MCF 10A (cell line): ENCODE measurements at regions of chr7 and their contacts with region 1.

Region 1: GRCh38 chr7:7424151-7424873 is 111.4 kb downstream of the COL28A1 start:
- DNase-seq: peak; percentile 85
- H3K4me3 Mint-ChIP-seq: peak overlapping the region; percentile 52
- H3K27ac Mint-ChIP-seq: no peak overlapping the region
- H3K4me1 Mint-ChIP-seq: peaks cover 20% of the 10 kb centered on the region
- H3K27me3 Mint-ChIP-seq: no peaks in the 10 kb centered on the region
- CTCF ChIP-seq: peak; percentile 89

Region 2: DNA sequence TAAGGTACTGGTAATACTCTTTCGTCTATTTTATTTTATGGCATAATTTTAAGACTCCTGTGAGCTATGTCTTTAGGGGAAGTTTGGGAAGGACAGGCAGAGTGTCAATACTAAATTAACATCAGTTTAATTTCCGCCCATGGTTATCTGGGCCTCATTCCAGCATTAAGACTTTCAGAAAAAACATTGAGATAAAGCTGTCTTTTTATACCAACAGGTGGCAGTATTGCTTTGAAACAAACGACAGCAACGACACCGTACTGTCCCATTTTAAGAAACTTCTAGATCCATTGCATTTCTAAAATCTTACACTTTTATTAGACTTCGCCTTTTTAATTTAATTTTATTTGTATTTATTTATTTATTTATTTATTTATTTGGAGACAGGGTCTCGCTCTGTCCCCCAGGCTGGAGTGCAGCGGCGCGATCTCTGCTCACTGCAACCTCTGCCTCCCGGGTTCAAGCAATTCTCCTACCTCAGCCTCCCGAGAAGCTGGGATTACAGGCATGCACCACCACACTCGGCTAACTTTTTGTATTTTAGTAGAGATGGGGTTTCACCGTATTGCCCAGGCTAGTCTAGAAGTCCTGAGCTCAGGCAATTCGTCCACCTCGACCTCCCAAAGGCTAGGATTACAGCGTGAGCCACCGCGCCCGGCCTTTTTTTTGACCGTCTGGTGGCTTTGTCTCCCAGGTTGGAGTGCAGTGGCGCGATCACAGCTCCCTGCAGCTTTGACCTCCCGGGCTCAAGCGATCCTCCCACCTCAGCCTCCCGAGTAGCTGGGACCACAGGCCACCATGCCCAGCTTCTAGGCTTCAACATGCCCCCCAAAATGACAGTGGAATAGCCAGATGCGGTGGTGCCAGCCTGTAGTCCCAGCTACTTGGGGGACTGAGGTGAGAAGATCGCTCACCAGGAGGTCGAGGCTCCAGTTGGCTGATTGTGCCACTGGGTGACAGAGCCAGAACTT is 320.7 kb before region 1 on chr7:
- CTCF ChIA-PET with region 1: interaction called, 68 read pairs
- POLR2A ChIA-PET with region 1: interaction called, 8 read pairs
- intact Hi-C with region 1: loop called (anchors 2 kb)
- DNase-seq: peak; percentile 73
- H3K4me3 Mint-ChIP-seq: no peak overlapping the region
- H3K27ac Mint-ChIP-seq: no peak overlapping the region
- H3K4me1 Mint-ChIP-seq: peaks cover 32% of the 10 kb centered on the region
- H3K27me3 Mint-ChIP-seq: no peaks in the 10 kb centered on the region
- CTCF ChIP-seq: peak; percentile 52

Region 3: GRCh38 chr7:7489546-7489945 is 65.2 kb after region 1 on chr7:
- CTCF ChIA-PET with region 1: interaction called, 8 read pairs
- POLR2A ChIA-PET with region 1: interaction called, 11 read pairs
- intact Hi-C with region 1: no loop called
- DNase-seq: peak; percentile 67
- H3K4me3 Mint-ChIP-seq: peak overlapping the region; percentile 1
- H3K27ac Mint-ChIP-seq: peak overlapping the region; percentile 71
- H3K4me1 Mint-ChIP-seq: peaks cover 27% of the 10 kb centered on the region
- H3K27me3 Mint-ChIP-seq: no peaks in the 10 kb centered on the region
- CTCF ChIP-seq: no peak

Region 4: GRCh38 chr7:7542251-7542835 is 118.0 kb after region 1 on chr7:
- CTCF ChIA-PET with region 1: interaction called, 92 read pairs
- POLR2A ChIA-PET with region 1: interaction called, 18 read pairs
- intact Hi-C with region 1: loop called (anchors 1 kb)
- DNase-seq: no peak
- H3K4me3 Mint-ChIP-seq: no peak overlapping the region
- H3K27ac Mint-ChIP-seq: peak overlapping the region; percentile 62
- H3K4me1 Mint-ChIP-seq: peaks cover 18% of the 10 kb centered on the region
- H3K27me3 Mint-ChIP-seq: no peaks in the 10 kb centered on the region
- CTCF ChIP-seq: no peak

Region 5: DNA sequence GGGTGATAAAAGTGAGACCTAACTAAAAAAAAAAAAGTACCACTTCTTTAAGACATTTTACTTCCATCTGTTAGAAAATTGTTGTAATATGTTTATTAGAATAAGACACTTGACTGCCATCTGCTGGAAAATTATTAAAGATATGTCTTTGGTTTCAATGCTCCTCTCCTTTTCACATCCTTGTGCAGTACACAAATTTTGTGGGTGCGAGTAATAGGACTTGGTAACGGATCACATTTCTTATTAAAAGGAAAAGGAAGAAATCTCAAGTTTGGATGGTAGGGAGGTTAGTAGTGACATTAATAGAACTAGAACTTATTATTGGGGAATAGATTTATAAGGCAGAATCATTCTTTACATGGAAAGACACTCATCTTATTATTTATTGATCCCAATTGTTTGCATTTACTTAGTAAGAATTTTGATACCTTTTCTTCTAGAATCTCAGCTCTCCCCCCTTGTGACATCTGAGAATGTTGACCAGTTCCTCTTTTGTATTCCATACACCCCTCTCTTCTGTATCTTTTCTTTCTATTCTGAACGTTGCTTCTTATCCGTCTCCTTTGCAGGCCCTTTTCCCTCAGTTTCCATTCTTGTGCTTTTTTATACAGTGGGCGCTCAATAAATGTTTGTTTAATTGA is 337.1 kb after region 1 on chr7:
- CTCF ChIA-PET with region 1: interaction called, 3 read pairs
- POLR2A ChIA-PET with region 1: no interaction called
- intact Hi-C with region 1: loop called (anchors 1 kb)
- DNase-seq: peak; percentile 64
- H3K4me3 Mint-ChIP-seq: peak overlapping the region; percentile 87
- H3K27ac Mint-ChIP-seq: peak overlapping the region; percentile 95
- H3K4me1 Mint-ChIP-seq: peaks cover 33% of the 10 kb centered on the region
- H3K27me3 Mint-ChIP-seq: no peaks in the 10 kb centered on the region
- CTCF ChIP-seq: peak; percentile 30

Region 6: GRCh38 chr7:8365503-8366110 is 941.3 kb after region 1 on chr7:
- CTCF ChIA-PET with region 1: no interaction called
- POLR2A ChIA-PET with region 1: no interaction called
- intact Hi-C with region 1: loop called (anchors 5 kb)
- DNase-seq: peak; percentile 57
- H3K4me3 Mint-ChIP-seq: no peak overlapping the region
- H3K27ac Mint-ChIP-seq: no peak overlapping the region
- H3K4me1 Mint-ChIP-seq: no peaks in the 10 kb centered on the region
- H3K27me3 Mint-ChIP-seq: peaks cover 57% of the 10 kb centered on the region
- CTCF ChIP-seq: peak; percentile 36